ENCODE measurements at regions of chr3 and their contacts with region 1.

Region 1: DNA sequence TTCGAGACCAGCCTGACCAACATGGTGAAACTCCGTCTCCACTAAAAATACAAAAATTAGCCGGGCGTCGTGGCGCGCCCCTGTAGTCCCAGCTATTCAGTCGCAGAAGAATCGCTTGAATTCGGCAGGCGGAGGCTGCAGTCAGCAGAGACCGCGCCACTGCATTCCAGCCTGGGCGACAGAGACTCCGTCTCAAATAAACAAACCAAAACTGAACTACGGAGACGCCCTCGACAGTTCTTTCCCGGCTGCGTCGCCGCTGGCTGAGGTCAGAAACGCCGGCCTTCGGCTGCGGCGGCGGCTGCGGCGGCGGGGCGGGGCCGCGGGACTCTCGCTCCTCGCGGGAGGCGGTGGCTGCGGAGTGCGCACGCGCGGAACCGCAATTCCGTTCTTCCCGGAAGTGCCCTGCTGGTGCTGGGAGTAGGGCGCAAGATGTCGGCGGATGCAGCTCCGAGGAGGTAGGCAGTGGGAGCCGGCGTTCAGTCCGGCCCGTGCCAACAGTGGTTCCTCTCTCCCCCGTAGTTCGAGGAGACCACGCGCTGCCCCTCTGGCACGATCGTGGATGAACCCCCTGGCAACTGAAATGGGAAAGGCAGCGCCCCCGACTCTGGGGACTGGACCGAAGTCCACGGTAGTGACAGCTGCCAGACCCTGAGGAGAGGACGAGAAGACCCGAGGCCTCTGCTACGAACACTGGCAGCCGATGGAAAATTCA is 49.5 kb downstream of the TMEM44 start:
- DNase-seq: peak; percentile 93 to 97
- ATAC-seq: peak; percentile 75 to 95 (median 92)
- H3K4me3 ChIP-seq: peak overlapping the region; percentile 63 to 92 (median 72)
- H3K27ac ChIP-seq: peak overlapping the region; percentile 89 to 99 (median 94)
- H3K4me1 ChIP-seq: peaks cover 0 to 59% (median 29%) of the 10 kb centered on the region in 9 donors
- H3K27me3 ChIP-seq: no peaks in the 10 kb centered on the region
- CTCF ChIP-seq: peak in 2 of 9 donors; percentile 7 to 10

Region 2: GRCh38 chr3:194486540-194487288 is 97.0 kb before region 1 on chr3 and contains the start of gene ATP13A3:
- intact Hi-C with region 1: loop called in 4 of 10 experiments (anchors 5 to 10 kb)
- DNase-seq: peak; percentile 89
- ATAC-seq: peak; percentile 91 to 97 (median 96)
- H3K4me3 ChIP-seq: peak within 1 kb of the TSS; percentile 54 to 87 (median 77)
- H3K27ac ChIP-seq: peak within 1 kb of the TSS; percentile 71 to 96 (median 91)
- H3K4me1 ChIP-seq: peaks cover 0 to 74% (median 37%) of the 10 kb centered on the region in 9 donors
- H3K27me3 ChIP-seq: no peaks in the 10 kb centered on the region
- CTCF ChIP-seq: no peak
- total RNA-seq, gene ATP13A3: 60.3 to 195 (median 109) TPM

Region 3: DNA sequence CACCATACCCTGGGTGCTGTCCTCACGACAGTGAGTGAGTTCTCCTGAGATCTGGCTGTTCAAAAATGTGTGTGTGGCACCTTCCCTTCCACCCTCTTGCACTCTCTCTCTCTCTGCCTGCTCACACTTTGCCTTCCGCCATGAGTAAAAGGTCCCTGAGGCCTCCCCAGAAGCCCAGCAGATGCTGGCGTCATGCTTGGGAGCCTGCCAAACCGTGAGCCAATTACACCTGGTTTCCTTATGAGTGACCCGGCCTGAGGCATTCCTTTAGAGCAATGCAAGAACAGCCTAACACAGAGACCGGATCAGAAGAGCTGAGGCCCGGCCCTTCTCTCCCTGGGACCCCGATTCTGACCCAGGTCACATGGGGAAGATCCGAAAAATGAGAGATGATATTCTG is 34.1 kb after region 1 on chr3:
- intact Hi-C with region 1: loop called in 1 of 10 experiments (anchors 1 kb)
- DNase-seq: no peak
- ATAC-seq: no peak
- H3K4me3 ChIP-seq: no peak overlapping the region
- H3K27ac ChIP-seq: no peak overlapping the region
- H3K4me1 ChIP-seq: peaks cover 0 to 6% (median 0%) of the 10 kb centered on the region in 9 donors
- H3K27me3 ChIP-seq: no peaks in the 10 kb centered on the region
- CTCF ChIP-seq: no peak

Measured in heart right ventricle (tissue), 16 donors.